CD8-positive, alpha-beta T cell (primary cell): ENCODE measurements at regions of chr18 and their contacts with region 1.

Region 1: GRCh38 chr18:79951578-79952455 is at the start of gene SLC66A2:
- DNase-seq: peak; percentile 91 to 99 (median 94)
- ATAC-seq: peak; percentile 93
- H3K4me3 ChIP-seq: peak within 1 kb of the TSS; percentile 60 to 69
- H3K4me3 Mint-ChIP-seq: peak within 1 kb of the TSS; percentile 88
- H3K27ac ChIP-seq: peak within 1 kb of the TSS in 1 of 2 experiments; percentile 58
- H3K27ac Mint-ChIP-seq: peak within 1 kb of the TSS; percentile 83
- H3K4me1 ChIP-seq: peaks cover 26% of the 10 kb centered on the region
- H3K4me1 Mint-ChIP-seq: peaks cover 26% of the 10 kb centered on the region
- H3K27me3 ChIP-seq: no peaks in the 10 kb centered on the region
- H3K27me3 Mint-ChIP-seq: no peaks in the 10 kb centered on the region
- CTCF ChIP-seq: no peak
- total RNA-seq, gene SLC66A2: 50.0 to 53.4 TPM

Region 2: DNA sequence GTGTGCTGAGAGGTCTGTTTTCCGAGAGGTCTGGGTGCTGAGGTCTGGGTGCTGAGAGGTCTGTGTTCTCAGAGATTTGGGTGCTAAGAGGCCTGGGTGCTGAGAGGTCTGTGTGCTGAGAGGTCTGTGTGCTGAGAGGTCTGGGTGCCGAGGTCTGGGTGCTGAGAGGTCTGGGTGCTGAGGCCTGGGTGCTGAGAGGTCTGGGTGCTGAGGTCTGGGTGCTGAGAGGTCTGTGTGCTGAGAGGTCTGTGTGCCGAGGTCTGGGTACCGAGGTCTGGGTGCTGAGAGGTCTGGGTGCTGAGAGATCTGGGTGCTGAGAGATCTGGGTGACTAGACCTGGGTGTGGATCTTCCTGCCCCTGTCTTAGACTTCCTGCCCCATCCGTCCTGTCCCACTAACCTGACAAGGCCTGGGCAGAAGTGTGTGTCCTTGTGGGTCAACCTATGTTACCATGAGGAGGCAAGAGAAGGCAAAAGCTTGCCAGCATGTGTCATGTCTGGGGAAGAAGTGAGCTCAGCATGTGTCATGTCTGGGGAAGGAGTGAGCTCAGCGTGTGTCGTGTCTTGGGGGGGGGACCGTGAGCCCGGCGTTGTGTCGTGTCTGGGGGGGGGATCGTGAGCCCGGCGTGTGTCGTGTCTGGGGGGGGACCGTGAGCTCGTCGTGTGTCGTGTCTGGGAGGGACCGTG is 84.8 kb before region 1 on chr18:
- CTCF ChIA-PET with region 1: no interaction called
- POLR2A ChIA-PET with region 1: no interaction called
- intact Hi-C with region 1: no loop called
- DNase-seq: no peak
- ATAC-seq: no peak
- H3K4me3 ChIP-seq: no peak overlapping the region
- H3K4me3 Mint-ChIP-seq: no peak overlapping the region
- H3K27ac ChIP-seq: no peak overlapping the region
- H3K27ac Mint-ChIP-seq: no peak overlapping the region
- H3K4me1 ChIP-seq: no peaks in the 10 kb centered on the region
- H3K4me1 Mint-ChIP-seq: no peaks in the 10 kb centered on the region
- H3K27me3 ChIP-seq: no peaks in the 10 kb centered on the region
- H3K27me3 Mint-ChIP-seq: peaks cover 2% of the 10 kb centered on the region
- CTCF ChIP-seq: no peak

Region 3: DNA sequence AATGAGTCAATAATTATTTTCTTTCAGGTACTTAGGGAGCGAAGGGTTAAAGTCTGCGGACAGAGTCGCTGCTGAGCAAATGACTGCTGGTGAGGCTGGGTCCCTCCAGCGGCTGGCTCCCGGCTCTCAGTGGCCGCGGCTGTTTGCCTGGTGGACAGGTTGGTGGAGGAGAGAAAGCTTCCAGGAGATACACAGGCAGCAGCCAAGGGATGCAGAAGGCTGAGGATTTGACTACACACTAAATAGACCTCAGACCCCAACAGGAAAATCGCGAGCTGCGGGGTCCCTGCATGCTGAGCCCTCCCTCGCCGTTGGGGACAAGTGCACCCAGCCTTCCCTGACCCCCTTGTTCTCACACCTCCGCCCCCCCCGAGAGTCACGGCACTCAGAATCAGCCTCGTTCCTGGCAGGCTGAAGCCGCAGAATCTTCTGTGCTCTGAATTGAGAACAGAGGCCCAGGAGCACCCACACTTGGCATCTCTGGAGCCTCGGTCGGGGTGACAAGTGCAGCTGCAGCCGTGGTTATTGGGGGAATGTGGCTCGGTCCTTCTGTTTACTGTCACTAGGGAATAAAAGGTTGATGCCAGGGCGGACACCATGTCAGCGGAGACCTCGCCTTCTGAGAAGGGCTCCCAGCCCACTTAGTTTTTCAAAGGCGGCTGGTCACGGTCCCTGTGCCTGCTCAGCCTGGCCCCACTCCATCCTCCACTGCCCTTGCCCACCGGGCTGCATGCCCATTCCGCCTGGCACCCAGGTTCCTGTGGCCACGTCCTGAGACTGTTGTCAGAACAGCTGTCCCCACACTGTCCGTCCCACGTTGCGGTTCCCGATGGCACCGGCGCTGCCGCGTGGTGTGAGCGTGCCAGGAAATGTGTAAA is 74.4 kb before region 1 on chr18:
- CTCF ChIA-PET with region 1: no interaction called
- POLR2A ChIA-PET with region 1: no interaction called
- intact Hi-C with region 1: no loop called
- DNase-seq: peak in 1 of 9 experiments; percentile 5
- ATAC-seq: no peak
- H3K4me3 ChIP-seq: no peak overlapping the region
- H3K4me3 Mint-ChIP-seq: no peak overlapping the region
- H3K27ac ChIP-seq: no peak overlapping the region
- H3K27ac Mint-ChIP-seq: no peak overlapping the region
- H3K4me1 ChIP-seq: no peaks in the 10 kb centered on the region
- H3K4me1 Mint-ChIP-seq: no peaks in the 10 kb centered on the region
- H3K27me3 ChIP-seq: no peaks in the 10 kb centered on the region
- H3K27me3 Mint-ChIP-seq: peaks cover 4% of the 10 kb centered on the region
- CTCF ChIP-seq: no peak

Region 4: GRCh38 chr18:79912409-79912991 is 39.3 kb before region 1 on chr18:
- CTCF ChIA-PET with region 1: no interaction called
- POLR2A ChIA-PET with region 1: interaction called, 3 read pairs
- intact Hi-C with region 1: loop called (anchors 2 kb)
- DNase-seq: peak in 8 of 9 experiments; percentile 39 to 82 (median 60)
- ATAC-seq: peak; percentile 74
- H3K4me3 ChIP-seq: no peak overlapping the region
- H3K4me3 Mint-ChIP-seq: peak overlapping the region; percentile 16
- H3K27ac ChIP-seq: peak overlapping the region; percentile 8 to 51
- H3K27ac Mint-ChIP-seq: peak overlapping the region; percentile 96
- H3K4me1 ChIP-seq: peaks cover 43% of the 10 kb centered on the region
- H3K4me1 Mint-ChIP-seq: peaks cover 33% of the 10 kb centered on the region
- H3K27me3 ChIP-seq: no peaks in the 10 kb centered on the region
- H3K27me3 Mint-ChIP-seq: no peaks in the 10 kb centered on the region
- CTCF ChIP-seq: no peak

Region 5: GRCh38 chr18:79964330-79965118 is 12.7 kb after region 1 on chr18 and contains the start of gene HSBP1L1:
- CTCF ChIA-PET with region 1: interaction called, 5 read pairs
- POLR2A ChIA-PET with region 1: interaction called, 3 read pairs
- intact Hi-C with region 1: loop called in 1 of 2 experiments (anchors 1 kb)
- DNase-seq: peak; percentile 38 to 82 (median 68)
- ATAC-seq: peak; percentile 72
- H3K4me3 ChIP-seq: peak within 1 kb of the TSS; percentile 61 to 67
- H3K4me3 Mint-ChIP-seq: peak within 1 kb of the TSS; percentile 86
- H3K27ac ChIP-seq: peak within 1 kb of the TSS; percentile 56 to 67
- H3K27ac Mint-ChIP-seq: peak within 1 kb of the TSS; percentile 92
- H3K4me1 ChIP-seq: peaks cover 32% of the 10 kb centered on the region
- H3K4me1 Mint-ChIP-seq: peaks cover 25% of the 10 kb centered on the region
- H3K27me3 ChIP-seq: no peaks in the 10 kb centered on the region
- H3K27me3 Mint-ChIP-seq: peaks cover 4% of the 10 kb centered on the region
- CTCF ChIP-seq: no peak
- total RNA-seq, gene HSBP1L1: 19.0 to 20.4 TPM

Region 6: GRCh38 chr18:79988451-79989194 is 36.8 kb after region 1 on chr18 and contains the start of gene TXNL4A:
- CTCF ChIA-PET with region 1: interaction called, 3 read pairs
- POLR2A ChIA-PET with region 1: interaction called, 8 read pairs
- intact Hi-C with region 1: loop called (anchors 1 kb)
- DNase-seq: peak; percentile 67 to 95 (median 83)
- ATAC-seq: peak; percentile 95
- H3K4me3 ChIP-seq: peak within 1 kb of the TSS; percentile 74 to 97
- H3K4me3 Mint-ChIP-seq: peak within 1 kb of the TSS; percentile 90
- H3K27ac ChIP-seq: peak within 1 kb of the TSS; percentile 91 to 98
- H3K27ac Mint-ChIP-seq: peak within 1 kb of the TSS; percentile 96
- H3K4me1 ChIP-seq: peaks cover 40% of the 10 kb centered on the region
- H3K4me1 Mint-ChIP-seq: peaks cover 43% of the 10 kb centered on the region
- H3K27me3 ChIP-seq: no peaks in the 10 kb centered on the region
- H3K27me3 Mint-ChIP-seq: no peaks in the 10 kb centered on the region
- CTCF ChIP-seq: no peak
- total RNA-seq, gene TXNL4A: 62.0 to 69.0 TPM

Region 7: DNA sequence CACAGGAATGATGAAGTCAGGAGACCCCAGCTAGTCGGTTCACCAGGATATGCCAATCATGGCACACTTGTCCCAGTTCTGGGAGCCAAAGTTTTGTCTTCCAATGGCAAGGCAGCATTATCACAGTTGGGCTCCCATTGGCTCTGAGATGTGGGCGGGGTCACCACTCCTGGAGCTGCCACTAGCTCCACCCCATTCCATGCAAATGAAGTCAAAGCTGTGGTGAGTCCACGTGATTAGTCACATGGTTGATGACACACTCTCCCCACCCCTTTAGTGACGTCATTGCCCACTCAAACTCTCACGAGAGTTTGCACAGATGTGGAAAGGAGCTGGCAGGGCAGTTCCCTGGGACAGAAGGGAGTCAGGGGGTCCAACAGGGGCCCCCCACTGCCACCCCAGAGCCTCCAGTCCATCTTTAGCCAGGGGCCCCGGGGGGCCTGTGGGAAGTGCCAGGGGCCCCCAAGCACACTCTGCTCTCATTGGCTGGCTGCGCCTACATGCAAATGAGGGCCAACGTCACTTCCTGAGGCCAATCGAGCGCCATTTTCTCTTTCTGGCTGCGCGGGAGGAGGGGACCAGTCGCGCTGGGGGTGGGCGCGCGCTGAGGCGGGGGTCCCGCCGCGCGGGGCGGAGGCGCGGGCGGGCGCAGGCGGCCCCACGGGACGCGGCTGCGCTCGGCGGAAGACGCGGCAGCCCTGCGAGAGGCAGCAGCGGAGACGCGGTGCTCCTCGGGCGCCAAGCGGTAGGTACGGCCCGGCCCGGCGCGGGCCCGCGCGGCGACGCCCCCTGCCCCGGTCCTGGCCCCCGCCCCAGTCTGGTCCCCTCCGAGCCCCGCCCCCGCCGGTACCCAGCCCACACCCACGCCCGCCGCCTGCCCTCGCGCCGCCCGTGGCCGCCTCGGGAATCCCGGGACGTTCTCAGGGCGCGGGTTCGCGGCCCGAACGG is 157.2 kb after region 1 on chr18 and contains the start of gene ADNP2:
- CTCF ChIA-PET with region 1: no interaction called
- POLR2A ChIA-PET with region 1: no interaction called
- intact Hi-C with region 1: loop called in 1 of 2 experiments (anchors 5 kb)
- DNase-seq: peak; percentile 41 to 96 (median 80)
- ATAC-seq: peak; percentile 80
- H3K4me3 ChIP-seq: peak within 1 kb of the TSS; percentile 66 to 72
- H3K4me3 Mint-ChIP-seq: peak within 1 kb of the TSS; percentile 84
- H3K27ac ChIP-seq: peak within 1 kb of the TSS; percentile 90 to 94
- H3K27ac Mint-ChIP-seq: peak within 1 kb of the TSS; percentile 95
- H3K4me1 ChIP-seq: peaks cover 16% of the 10 kb centered on the region
- H3K4me1 Mint-ChIP-seq: peaks cover 42% of the 10 kb centered on the region
- H3K27me3 ChIP-seq: no peaks in the 10 kb centered on the region
- H3K27me3 Mint-ChIP-seq: no peaks in the 10 kb centered on the region
- CTCF ChIP-seq: no peak
- total RNA-seq, gene ADNP2: 96.7 to 100 TPM

Region 8: GRCh38 chr18:80147418-80148325 is 195.9 kb after region 1 on chr18:
- CTCF ChIA-PET with region 1: no interaction called
- POLR2A ChIA-PET with region 1: no interaction called
- intact Hi-C with region 1: loop called in 1 of 2 experiments (anchors 10 kb)
- DNase-seq: peak; percentile 52 to 85 (median 76)
- ATAC-seq: peak; percentile 88
- H3K4me3 ChIP-seq: peak overlapping the region; percentile 53 to 61
- H3K4me3 Mint-ChIP-seq: peak overlapping the region; percentile 83
- H3K27ac ChIP-seq: peak overlapping the region in 1 of 2 experiments; percentile 31
- H3K27ac Mint-ChIP-seq: no peak overlapping the region
- H3K4me1 ChIP-seq: peaks cover 11% of the 10 kb centered on the region
- H3K4me1 Mint-ChIP-seq: peaks cover 21% of the 10 kb centered on the region
- H3K27me3 ChIP-seq: no peaks in the 10 kb centered on the region
- H3K27me3 Mint-ChIP-seq: peaks cover 7% of the 10 kb centered on the region
- CTCF ChIP-seq: no peak